ENCODE measurements at regions of chr12 and their contacts with region 1.

Region 1: DNA sequence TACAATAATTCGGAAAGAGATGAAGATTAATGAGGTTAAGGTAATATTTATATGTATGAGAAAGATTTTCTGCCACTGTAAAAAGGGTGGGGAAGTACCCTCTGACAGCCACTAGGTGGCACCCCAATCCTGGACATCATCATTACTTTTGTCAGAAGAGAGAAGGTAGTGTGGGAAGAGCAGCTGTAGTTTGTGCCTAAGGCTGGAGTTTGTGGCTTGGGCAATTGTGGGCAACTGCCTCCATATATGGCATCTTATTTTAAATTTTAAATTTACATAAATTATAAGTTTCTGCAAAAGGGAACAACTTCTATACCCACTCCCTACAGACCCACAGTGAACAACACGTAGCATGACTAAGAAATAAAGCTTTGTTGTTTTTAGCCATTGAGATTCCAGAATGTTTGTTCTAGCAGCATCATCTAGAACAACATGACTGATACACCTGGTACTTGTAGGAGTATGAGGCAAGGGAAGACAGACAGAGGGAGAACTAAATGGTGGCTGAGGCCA is 34.4 kb upstream of the SYCP3 start:
- DNase-seq: peak; percentile 78
- CTCF ChIP-seq: peak; percentile 89

Region 2: DNA sequence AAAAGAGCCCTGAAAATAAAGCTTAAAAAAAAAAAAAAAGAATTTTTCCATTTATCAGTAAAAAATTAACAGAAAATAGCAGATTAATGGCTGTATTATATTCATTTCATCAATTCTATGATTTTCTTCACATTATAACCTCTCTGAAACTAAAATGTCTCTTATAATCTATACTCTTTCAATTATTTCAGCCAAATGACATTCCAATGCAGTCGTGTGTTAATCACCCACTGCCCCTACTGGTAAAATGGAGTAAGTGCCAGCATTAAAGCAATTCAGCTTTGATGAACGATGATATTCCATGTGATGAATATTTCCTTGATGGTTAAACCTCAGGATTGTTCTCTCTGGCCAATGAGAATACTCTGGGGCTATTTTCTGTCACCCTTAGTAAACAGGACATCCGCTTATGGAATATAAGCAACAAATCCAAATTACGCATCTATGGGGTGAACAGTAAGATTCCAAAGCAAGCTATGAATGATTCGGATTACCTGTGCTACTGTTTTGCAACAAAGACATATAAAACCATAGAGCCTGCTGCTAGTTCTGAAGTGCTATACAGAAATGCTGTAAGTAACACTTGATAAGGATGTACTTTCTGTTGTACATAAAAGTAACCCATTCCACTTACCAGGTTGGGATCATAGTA is 14.2 kb before region 1 on chr12:
- CTCF ChIA-PET with region 1: interaction called, 30 read pairs
- POLR2A ChIA-PET with region 1: no interaction called
- DNase-seq: peak; percentile 44
- CTCF ChIP-seq: peak; percentile 71

Region 3: GRCh38 chr12:101823891-101824290 is 50.2 kb after region 1 on chr12:
- CTCF ChIA-PET with region 1: interaction called, 96 read pairs
- POLR2A ChIA-PET with region 1: interaction called, 4 read pairs
- DNase-seq: peak; percentile 60
- CTCF ChIP-seq: peak; percentile 3

Region 4: GRCh38 chr12:101839324-101840283 is 65.9 kb after region 1 on chr12:
- CTCF ChIA-PET with region 1: interaction called, 53 read pairs
- POLR2A ChIA-PET with region 1: no interaction called
- DNase-seq: peak; percentile 56
- CTCF ChIP-seq: peak; percentile 78

Region 5: DNA sequence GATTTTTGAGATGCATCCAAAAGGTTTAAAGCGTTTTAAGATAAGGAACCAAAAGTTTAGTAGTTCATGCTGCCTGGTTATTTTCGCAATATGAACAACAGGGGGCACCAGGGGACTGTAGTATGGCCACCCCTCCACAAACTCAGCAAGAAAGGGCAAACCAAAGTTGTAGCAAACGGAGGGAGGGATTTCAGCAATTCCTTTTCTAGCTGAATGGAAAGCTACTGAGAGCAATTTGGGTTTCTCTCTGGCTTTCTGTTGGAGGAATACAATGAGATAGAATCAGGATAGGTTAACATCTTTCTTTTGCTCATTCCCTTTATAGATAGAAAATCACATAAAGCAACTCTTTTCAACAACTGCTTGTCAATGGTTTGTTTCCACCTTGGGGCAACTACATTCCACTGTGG is 166.2 kb after region 1 on chr12:
- CTCF ChIA-PET with region 1: interaction called, 12 read pairs
- POLR2A ChIA-PET with region 1: no interaction called
- DNase-seq: no peak
- CTCF ChIP-seq: peak; percentile 72